Activated naive CD4-positive, alpha-beta T cell treated with anti-CD3 and anti-CD28 coated beads for 36 hours (primary cell): ENCODE measurements at regions of chr1 and their contacts with region 1.

Region 1: GRCh38 chr1:24955161-24955560 is 25.1 kb upstream of the RUNX3 start:
- DNase-seq: peak; percentile 94
- H3K4me3 Mint-ChIP-seq: peak overlapping the region; percentile 89
- H3K27ac Mint-ChIP-seq: peak overlapping the region; percentile 95
- H3K4me1 Mint-ChIP-seq: peaks cover 85% of the 10 kb centered on the region
- H3K27me3 Mint-ChIP-seq: no peaks in the 10 kb centered on the region

Region 2: DNA sequence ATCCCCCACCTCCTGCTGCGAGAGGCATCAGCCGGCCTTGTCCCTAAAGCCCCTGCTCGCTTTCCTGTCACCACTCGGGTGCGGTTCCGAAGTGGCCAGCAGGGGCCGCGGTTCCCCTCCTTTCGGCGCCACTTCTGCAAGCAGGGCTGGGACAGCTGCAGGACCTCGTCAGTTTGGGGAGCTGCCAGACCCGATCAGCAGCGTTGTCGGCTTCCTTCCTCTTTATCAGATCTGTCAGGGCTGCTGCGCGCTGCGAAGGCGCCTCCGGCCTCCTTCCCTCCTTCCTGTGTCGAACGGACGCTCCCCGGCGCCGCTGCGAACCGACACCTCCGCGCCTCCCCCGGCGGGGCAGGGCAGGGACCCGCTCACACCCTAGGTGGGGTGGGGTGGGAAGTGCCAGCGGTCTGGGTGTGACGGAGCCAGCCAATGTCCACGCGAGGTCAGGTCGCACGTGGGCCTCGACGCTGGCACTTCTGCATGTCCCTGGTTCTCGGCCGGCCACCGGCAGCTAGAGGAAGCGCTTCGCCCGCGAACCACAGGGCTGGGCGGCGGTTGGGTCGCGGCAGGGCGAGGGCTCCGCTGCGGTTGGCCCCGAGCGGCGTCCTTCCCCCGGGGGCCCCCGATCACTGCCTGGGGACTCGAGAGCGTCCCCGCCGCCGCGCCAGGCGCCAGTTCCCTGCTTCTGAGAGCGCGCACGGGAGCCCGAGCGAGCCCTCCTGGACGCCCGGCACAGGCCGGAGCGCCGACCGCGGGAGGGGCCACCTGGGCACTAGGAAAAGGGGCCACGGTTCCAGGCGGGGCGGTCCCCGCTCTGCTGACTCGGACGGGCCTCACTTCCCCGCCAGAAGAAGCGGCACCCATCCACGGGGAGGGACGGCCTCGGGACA is 106.9 kb before region 1 on chr1:
- CTCF ChIA-PET with region 1: interaction called, 6 read pairs
- intact Hi-C with region 1: loop called (anchors 2 kb)
- DNase-seq: peak; percentile 94
- H3K4me3 Mint-ChIP-seq: peak overlapping the region; percentile 70
- H3K27ac Mint-ChIP-seq: no peak overlapping the region
- H3K4me1 Mint-ChIP-seq: peaks cover 7% of the 10 kb centered on the region
- H3K27me3 Mint-ChIP-seq: peaks cover 3% of the 10 kb centered on the region

Region 3: DNA sequence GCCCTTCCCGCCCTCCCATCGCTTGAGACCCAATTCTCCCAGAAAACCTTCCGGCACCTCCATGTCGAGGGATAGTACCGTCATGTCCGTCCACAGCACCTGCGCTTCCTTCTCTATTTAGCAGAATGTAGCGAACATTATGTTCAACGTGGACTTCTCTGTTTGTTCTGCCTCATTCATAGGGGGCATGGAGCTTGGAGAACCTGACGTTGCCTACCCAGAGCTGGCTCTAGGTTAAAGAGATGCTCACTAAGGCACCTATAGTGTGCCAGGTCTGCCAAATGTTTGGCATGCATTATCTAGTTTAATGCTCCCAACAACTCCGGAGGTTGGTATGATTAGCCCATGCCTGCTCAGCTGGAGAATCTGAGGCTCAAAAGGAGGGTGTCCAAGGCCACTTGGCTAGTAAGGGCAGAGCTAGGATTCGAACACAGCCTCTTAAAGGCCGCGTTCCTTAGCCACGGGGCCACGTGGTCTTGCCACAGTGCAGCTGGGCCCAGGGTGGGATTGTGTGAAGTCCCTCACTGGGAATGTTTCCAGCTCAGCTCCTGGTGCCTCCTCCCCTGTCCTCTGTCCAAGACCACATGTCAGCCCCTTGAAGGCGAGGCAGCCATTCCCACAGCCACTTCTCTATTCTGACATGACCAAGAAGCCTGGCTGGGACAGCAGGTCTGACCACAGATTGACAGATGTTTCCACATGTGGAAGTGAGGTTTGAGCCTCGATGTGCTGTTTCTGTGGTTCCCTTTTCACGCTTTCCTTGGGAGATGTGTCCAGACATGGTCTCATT is 82.9 kb before region 1 on chr1:
- CTCF ChIA-PET with region 1: no interaction called
- intact Hi-C with region 1: no loop called
- DNase-seq: no peak
- H3K4me3 Mint-ChIP-seq: no peak overlapping the region
- H3K27ac Mint-ChIP-seq: no peak overlapping the region
- H3K4me1 Mint-ChIP-seq: peaks cover 8% of the 10 kb centered on the region
- H3K27me3 Mint-ChIP-seq: no peaks in the 10 kb centered on the region

Region 4: DNA sequence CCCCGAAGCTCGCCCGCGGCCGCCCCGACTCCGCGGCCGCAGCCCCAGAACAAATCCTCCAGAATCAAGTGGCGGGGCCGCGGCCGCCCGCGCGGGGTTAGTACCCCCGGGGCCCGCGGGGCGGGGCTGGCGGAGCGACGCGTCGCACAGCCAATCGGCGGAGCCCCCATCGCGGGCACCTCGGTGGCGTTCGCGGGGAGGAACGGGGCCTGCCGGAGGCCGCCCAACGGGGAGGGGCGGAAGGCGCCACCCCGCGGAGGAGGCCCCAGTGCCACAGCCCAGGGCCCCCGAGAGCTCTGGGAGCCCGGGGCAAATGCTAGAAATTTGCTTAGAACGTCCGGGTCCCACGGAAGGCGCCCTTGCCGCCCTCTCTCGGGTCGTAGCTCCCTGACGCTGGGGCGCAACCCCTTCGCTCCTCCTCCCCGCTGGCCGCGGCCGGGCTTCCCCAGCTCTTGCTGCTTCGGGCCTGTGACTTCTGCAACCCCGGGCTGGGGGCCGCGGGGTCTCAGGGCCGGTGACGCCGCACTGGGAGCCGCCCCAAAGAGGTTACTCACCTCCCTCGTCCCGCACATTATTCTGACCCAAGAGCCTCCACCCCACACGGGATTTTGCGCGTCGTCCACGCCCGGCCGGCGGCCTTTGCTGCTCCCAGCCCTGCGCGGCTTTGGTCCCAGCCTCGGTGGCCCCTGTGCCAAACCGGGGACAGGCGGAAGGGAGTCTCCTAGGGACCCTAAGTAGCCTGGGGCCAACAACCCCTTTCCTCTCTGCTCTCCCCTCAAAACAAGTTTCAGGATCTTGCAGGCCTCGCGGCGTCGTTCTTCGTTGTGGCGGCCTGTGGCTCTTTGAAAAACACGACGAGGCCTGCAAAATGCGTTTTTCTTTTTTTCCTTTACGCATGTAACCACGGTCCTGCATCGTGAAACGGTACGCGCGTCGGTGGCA is 24.7 kb before region 1 on chr1 and contains the start of gene RUNX3:
- CTCF ChIA-PET with region 1: interaction called, 15 read pairs
- intact Hi-C with region 1: loop called (anchors 1 kb)
- DNase-seq: peak; percentile 93
- H3K4me3 Mint-ChIP-seq: peak within 1 kb of the TSS; percentile 94
- H3K27ac Mint-ChIP-seq: peak within 1 kb of the TSS; percentile 92
- H3K4me1 Mint-ChIP-seq: peaks cover 66% of the 10 kb centered on the region
- H3K27me3 Mint-ChIP-seq: no peaks in the 10 kb centered on the region
- total RNA-seq, gene RUNX3: 72.3 to 83.8 TPM

Region 5: GRCh38 chr1:24987875-24988557 is 32.9 kb after region 1 on chr1:
- CTCF ChIA-PET with region 1: interaction called, 6 read pairs
- intact Hi-C with region 1: loop called (anchors 2 kb)
- DNase-seq: peak; percentile 73
- H3K4me3 Mint-ChIP-seq: no peak overlapping the region
- H3K27ac Mint-ChIP-seq: peak overlapping the region; percentile 84
- H3K4me1 Mint-ChIP-seq: peaks cover 95% of the 10 kb centered on the region
- H3K27me3 Mint-ChIP-seq: no peaks in the 10 kb centered on the region

Region 6: DNA sequence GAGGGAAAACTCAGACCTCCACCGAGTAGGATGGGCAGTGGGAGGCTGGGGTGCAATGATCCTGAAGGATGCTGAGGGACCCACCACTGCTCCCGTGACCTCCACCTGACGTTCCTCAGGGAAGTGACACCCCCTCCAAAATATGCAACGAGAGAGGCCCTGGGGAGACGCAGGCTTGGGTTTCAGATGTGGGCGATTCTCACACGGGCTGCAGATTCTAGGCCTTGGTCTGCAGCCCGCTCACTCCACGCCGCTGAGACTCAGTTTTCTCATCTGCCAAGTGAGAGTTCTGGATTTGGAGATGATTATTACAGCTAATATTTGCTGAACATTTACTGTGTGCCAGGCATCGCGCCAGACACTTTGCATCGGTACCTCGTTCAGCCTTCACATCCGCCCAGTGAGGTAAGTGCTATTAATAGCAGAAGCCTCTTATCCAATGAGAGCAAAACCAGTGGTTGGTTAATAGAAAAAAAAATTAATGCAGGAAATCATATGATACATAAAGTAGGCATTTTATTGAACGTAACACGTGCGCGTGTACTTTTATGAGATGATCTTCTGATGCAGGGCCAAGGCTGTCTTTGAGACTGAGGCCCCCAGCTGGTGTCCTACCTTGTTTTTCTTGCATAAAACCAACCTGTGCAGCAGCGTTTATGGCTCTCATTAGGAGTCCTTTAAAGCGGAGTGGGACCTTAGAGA is 77.0 kb after region 1 on chr1:
- CTCF ChIA-PET with region 1: interaction called, 60 read pairs
- intact Hi-C with region 1: loop called (anchors 1 kb)
- DNase-seq: peak; percentile 70
- H3K4me3 Mint-ChIP-seq: peak overlapping the region; percentile 81
- H3K27ac Mint-ChIP-seq: peak overlapping the region; percentile 99
- H3K4me1 Mint-ChIP-seq: peaks cover 75% of the 10 kb centered on the region
- H3K27me3 Mint-ChIP-seq: no peaks in the 10 kb centered on the region

Region 7: DNA sequence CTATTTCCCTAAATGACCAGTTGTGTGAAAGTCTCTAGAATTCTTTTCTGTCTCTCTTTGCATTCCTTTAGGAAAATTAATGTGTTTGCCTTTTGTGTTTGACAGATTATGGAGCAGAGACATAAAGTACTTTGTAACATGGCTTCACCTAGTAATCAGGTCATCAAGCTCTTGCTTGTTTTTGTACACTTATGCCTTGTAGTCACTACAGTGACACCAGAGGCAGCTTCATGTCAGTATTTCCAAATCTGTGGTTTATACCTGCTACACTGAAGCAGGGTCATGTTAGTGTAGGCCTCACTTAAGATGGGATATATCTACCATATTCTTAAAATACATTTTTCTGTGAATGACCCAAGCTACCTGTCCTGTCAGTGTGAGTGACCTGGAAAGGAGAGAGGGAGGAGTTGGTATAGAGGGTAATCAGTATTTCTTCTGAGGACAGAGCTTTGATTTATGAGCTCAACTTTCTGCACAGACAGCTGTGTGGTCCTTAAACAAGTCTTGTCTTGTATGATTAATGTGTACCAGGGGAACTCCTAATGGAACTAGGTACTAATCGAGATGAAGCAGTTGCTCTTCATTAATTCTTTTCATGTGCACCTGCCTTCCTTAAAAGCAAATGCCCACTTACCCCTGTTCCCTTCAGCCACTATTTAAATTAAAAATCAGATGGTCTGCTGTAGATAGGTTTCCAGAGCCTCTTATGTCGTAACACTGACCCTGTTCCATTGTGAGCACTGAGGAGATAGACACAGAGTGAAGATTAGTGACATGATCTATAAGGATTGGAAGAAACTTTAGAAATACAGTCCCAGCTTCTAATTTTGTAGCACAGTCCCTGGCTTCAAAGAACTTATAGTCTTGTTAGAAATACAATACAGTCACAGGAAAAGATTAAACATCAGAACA is 521.3 kb after region 1 on chr1:
- CTCF ChIA-PET with region 1: no interaction called
- intact Hi-C with region 1: loop called (anchors 10 kb)
- DNase-seq: no peak
- H3K4me3 Mint-ChIP-seq: no peak overlapping the region
- H3K27ac Mint-ChIP-seq: peak overlapping the region; percentile 54
- H3K4me1 Mint-ChIP-seq: peaks cover 57% of the 10 kb centered on the region
- H3K27me3 Mint-ChIP-seq: no peaks in the 10 kb centered on the region